Aorta (tissue), 5 donors: ENCODE measurements at regions of chr12 and their contacts with region 1.

Region 1: DNA sequence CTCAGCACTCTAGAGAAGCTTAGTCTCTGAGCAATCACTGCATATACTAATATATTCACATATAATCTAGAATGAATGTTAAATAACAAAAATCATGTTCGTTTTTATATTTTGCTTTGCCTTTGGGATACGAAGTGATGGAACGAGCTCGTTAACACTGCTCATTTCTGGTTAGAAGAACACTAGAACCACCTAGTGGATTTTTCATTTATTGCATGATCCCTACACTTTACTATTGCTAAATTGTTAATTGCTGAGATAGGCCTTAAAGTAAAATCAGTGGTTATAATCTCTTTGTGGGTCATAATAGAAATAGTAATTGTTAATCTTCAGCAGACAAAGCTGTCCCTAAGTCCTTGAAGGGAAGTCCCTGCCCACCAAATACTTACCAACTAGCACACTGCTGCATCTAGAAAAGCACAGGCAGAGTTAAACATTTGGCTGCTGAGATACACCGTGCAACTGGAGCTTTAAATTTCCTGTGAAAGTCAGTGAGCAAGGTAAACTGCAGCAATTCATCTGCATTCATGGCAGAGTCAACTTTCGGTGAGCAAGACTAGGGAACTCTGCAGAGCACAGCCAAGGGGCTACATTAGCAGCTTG is 353.7 kb downstream of the APAF1 start:
- DNase-seq: no peak
- ATAC-seq: peak; percentile 86
- H3K4me3 ChIP-seq: no peak overlapping the region
- H3K27ac ChIP-seq: no peak overlapping the region
- H3K4me1 ChIP-seq: peaks cover 0 to 1% of the 10 kb centered on the region in 2 donors
- H3K27me3 ChIP-seq: no peaks in the 10 kb centered on the region

Region 2: DNA sequence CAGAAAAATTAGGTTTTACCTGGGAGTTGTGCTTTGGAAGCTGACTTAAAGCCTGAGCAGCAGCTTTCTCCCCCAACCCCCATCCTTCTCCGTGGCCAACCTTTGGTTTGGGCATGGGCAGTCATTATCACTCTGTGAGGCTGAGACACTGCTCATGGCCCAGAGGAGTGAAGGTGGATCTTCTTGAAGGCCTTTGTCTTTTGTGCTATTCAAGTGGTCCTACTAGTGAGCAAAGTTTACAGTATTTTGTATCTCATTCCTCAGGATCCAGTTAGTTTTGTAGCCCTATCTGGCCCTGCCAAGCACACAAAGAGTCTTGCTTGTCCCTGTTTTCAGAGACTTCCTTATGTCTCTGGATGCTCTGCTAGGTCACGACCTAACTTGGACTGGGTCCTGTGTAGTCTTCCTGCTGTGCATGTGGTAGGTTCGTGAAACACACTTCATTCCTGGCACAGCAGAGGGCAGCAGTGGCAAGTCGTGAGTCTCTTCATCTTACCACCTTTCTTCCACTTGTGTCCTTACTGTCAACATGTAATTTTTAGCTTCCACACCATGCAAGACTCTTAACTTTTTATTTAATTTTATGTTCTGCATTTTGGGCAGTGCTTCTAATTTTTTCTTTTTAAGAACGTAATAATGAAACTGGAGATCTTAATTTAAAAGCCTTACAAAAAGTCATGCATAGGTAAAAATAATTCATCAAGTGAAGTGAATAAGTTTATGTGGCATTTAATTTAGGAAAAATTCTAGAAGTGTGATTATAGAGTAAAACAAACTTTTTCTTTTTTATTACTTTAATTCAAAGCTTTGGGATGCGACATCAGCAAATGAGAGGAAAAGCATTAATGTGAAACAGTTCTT is 300.0 kb before region 1 on chr12:
- intact Hi-C with region 1: loop called in 1 of 2 experiments (anchors 2 kb)
- DNase-seq: peak in 1 of 2 donors; percentile 64
- ATAC-seq: peak; percentile 77
- H3K4me3 ChIP-seq: peak overlapping the region in 1 of 2 donors; percentile 34
- H3K27ac ChIP-seq: peak overlapping the region in 1 of 2 donors; percentile 41
- H3K4me1 ChIP-seq: no peaks in the 10 kb centered on the region
- H3K27me3 ChIP-seq: no peaks in the 10 kb centered on the region

Region 3: DNA sequence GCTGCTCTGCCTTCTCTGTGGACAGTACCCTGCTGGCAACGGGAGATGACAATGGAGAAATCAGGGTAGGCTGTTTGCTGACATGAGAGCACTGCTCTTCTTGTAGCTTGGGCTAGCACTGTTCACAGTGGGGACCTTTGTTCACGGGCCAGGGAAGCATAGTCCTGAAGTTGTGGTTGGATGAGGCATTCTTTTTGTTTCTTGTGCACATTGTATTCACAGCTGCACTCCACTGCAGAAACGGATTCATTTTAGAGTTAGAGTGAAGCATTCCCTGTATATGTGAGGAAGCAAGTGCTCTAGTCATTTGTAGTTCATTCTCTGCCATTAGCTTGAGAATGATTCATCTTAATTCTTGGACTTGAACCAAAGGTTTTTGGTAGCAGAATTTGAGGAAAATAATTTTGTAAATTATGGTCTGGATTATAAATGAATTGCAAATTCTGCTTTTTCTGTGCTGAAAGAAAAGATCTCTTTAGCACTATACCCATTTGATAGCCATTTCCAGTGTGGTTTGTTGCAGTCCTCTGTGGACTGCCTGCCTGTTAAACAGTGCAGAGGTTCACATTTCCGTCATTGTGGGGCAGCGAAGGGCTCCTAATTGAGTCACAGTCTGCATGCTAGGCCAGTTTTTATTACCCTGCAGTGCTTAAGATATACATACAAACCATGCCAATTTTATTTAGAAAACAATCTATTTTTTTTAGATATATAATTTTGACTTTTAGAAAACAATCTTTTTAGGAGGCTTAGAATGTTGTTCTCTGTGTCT is 273.1 kb before region 1 on chr12:
- intact Hi-C with region 1: loop called (anchors 10 kb)
- DNase-seq: peak in 1 of 2 donors; percentile 54
- ATAC-seq: peak; percentile 74
- H3K4me3 ChIP-seq: no peak overlapping the region
- H3K27ac ChIP-seq: no peak overlapping the region
- H3K4me1 ChIP-seq: no peaks in the 10 kb centered on the region
- H3K27me3 ChIP-seq: no peaks in the 10 kb centered on the region

Region 4: DNA sequence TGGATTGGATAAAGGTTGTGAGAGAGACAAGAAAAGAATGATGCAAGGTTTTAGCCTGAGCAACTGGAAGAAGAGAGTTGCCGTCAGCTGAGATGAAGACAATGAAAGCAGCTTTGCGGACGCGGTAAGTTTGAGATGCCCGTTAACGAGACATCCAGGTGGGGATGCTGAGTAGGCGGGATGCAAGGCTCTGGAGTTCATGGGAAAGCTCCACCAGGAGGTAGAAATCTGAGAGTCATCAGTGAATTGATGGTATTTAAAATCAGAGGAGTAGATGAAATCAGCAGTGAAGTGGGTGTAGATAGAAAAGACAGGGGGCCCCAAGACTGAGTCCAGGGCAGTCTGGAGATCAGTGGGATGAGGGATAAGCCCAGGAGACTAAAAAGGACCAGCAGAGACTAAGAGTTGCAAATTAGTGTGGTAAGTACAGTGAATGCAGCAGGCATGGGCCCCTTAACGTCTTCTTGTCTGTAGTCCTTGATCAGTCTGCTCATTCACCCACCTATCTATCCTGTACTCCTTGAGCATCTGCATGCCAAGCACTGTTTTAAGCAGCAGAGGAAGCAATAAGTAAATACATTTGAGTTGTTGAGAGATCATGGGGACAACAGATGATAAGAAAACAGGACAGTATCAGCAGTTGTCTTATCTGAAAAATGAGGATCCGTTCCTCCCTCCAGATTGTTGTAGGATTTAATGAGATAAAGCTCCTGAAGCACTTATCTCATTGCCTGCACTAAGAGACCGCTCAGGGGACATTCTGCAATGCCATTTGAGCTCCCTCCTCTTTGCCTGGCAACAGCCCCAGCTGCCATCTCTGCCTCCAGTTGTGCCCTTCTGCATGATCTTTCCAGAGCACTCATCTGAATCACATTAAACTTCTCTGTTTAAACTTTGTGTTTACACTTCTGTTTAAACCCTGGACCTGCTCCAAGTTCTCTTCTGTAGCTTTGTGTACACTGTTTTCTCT is 262.2 kb before region 1 on chr12:
- intact Hi-C with region 1: loop called in 1 of 2 experiments (anchors 10 kb)
- DNase-seq: no peak
- ATAC-seq: no peak
- H3K4me3 ChIP-seq: no peak overlapping the region
- H3K27ac ChIP-seq: no peak overlapping the region
- H3K4me1 ChIP-seq: no peaks in the 10 kb centered on the region
- H3K27me3 ChIP-seq: no peaks in the 10 kb centered on the region

Region 5: GRCh38 chr12:99059824-99060511 is 61.2 kb after region 1 on chr12:
- intact Hi-C with region 1: no loop called
- DNase-seq: peak in 1 of 2 donors; percentile 66
- ATAC-seq: peak; percentile 70
- H3K4me3 ChIP-seq: no peak overlapping the region
- H3K27ac ChIP-seq: no peak overlapping the region
- H3K4me1 ChIP-seq: no peaks in the 10 kb centered on the region
- H3K27me3 ChIP-seq: no peaks in the 10 kb centered on the region

Region 6: DNA sequence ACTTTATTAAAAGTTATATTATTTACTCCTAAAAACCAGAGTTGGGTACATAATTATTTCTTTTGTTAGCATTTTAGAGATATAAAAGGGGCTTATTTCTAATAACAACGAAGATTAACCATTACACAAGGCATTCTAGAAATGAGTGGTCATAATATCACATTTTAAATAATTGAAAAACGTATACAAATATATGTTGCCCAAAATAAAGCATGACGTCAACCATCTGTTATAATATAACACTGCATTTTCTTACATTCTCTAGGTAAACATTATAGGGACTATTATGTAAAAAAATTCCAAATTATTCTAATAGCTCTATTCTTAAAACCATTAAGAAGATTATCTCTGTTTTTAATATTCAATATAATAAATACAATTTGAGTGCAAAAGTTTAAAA is 193.7 kb after region 1 on chr12:
- intact Hi-C with region 1: no loop called
- DNase-seq: no peak
- ATAC-seq: no peak
- H3K4me3 ChIP-seq: no peak overlapping the region
- H3K27ac ChIP-seq: no peak overlapping the region
- H3K4me1 ChIP-seq: no peaks in the 10 kb centered on the region
- H3K27me3 ChIP-seq: no peaks in the 10 kb centered on the region